ENCODE measurements at regions of chr9 and their contacts with region 1.

Region 1: DNA sequence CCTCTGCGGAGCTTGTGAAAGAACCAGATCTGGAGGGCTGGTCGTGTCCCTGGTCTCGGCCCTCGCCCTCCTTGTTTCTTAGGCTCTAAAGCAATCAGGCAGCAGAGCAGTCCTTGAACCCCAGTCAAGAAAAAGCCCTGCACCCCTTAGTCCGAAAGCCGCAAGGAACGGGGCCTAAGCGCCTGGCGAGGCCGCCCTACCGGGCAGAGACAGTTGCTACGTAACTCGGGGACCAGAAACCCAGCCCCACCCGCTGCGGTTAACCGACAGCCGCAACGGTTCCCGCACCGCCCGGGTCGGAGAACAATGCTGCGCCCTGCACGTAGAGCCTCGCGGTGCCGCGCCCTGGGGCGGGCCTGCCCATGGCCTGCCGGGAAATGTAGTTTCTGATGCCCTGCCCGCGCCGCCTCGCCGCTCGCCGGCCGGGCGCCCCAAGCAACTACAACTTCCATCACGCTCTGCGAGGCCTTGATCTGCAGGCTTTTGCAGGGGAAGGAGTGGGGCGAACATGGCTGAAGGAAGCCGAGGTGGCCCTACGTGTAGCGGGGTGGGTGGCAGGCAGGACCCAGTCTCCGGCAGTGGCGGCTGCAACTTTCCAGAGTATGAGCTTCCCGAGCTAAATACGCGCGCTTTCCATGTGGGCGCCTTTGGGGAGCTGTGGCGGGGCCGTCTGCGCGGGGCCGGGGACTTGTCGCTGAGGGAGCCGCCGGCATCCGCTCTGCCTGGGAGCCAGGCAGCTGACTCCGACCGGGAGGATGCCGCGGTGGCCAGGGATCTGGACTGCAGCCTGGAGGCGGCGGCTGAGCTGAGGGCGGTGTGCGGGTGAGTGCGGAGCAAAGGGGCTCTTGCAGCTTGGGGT is at the start of gene SNAPC3:
- DNase-seq: peak; percentile 95
- ATAC-seq: peak; percentile 98
- H3K4me3 ChIP-seq: peak within 1 kb of the TSS; percentile 73 to 95 (median 87)
- H3K4me3 Mint-ChIP-seq: peak within 1 kb of the TSS; percentile 93
- H3K27ac ChIP-seq: peak within 1 kb of the TSS; percentile 68 to 74
- H3K27ac Mint-ChIP-seq: peak within 1 kb of the TSS; percentile 84
- H3K4me1 ChIP-seq: peaks cover 32 to 34% of the 10 kb centered on the region in 2 donors
- H3K4me1 Mint-ChIP-seq: peaks cover 39% of the 10 kb centered on the region
- H3K27me3 ChIP-seq: no peaks in the 10 kb centered on the region
- H3K27me3 Mint-ChIP-seq: no peaks in the 10 kb centered on the region
- CTCF ChIP-seq: no peak
- total RNA-seq, gene SNAPC3: 48.3 and 52.1 TPM in 2 replicates

Region 2: DNA sequence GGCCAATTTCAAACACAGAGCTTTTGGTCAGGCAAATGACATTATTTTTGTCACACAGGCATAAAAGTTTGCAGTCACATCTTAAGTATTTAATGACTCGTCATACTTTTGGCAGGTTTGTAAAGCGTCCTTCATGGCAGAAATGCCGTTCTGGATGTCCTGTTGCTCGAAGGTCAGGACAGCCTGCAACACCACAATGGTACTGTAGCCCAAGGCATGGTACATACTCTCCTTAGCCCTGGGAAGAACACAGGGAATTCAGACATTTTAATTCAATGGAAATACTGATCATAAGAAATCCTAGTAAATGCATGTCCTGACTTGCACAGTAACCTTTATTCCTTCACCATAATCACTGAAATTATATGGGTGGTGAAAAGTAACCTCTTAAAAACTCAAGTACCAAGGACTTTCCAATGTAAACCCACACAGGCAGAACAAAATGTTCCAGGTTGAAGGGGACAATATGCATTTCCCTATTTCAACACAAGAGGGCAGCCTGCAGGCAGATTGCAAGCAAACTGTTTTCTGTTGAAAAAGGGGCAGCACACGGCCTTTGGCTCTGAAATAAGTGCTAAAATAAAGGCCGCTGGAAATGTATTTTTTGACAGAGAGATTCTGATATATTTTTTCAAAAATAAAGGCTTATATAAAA is 211.3 kb before region 1 on chr9:
- CTCF ChIA-PET with region 1: interaction called, 3 read pairs
- POLR2A ChIA-PET with region 1: no interaction called
- intact Hi-C with region 1: loop called (anchors 1 kb)
- DNase-seq: peak; percentile 69
- ATAC-seq: peak; percentile 54
- H3K4me3 ChIP-seq: no peak overlapping the region
- H3K4me3 Mint-ChIP-seq: no peak overlapping the region
- H3K27ac ChIP-seq: no peak overlapping the region
- H3K27ac Mint-ChIP-seq: no peak overlapping the region
- H3K4me1 ChIP-seq: no peaks in the 10 kb centered on the region
- H3K4me1 Mint-ChIP-seq: no peaks in the 10 kb centered on the region
- H3K27me3 ChIP-seq: no peaks in the 10 kb centered on the region
- H3K27me3 Mint-ChIP-seq: no peaks in the 10 kb centered on the region
- CTCF ChIP-seq: peak; percentile 96

Region 3: DNA sequence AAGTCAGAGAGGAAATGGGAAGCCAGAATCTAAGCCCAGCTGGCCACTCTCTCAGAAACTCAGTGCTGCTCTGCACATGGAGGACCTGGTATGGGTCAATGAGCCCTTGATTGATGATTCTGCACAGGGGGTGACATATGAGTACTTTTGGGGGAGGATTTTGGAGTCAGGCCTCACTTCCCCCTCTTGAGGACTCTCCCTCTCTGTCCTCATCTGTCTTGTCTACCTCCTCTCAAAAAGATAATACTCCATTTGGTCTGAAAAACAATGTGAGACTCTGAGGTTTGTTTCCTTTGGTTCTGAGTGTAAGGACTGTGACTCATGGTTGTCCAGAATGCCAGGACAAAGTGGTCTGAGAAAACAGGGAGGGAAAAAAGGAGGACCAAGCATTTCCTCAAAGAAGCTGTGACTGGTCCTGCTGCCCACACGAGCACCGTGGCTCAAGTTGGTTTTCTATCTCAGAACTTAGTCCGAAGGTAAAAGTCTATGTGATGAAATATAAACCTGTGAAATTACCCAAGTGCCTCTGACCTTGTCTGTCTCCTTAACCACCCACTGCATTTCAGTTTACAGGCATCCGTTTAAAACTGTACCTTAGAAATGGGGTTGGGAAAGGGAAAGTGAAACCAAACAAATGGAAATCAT is 126.7 kb before region 1 on chr9:
- CTCF ChIA-PET with region 1: no interaction called
- POLR2A ChIA-PET with region 1: no interaction called
- intact Hi-C with region 1: loop called (anchors 2 kb)
- DNase-seq: peak; percentile 47
- ATAC-seq: peak; percentile 53
- H3K4me3 ChIP-seq: peak overlapping the region; percentile 18 to 67 (median 53)
- H3K4me3 Mint-ChIP-seq: peak overlapping the region; percentile 84
- H3K27ac ChIP-seq: peak overlapping the region; percentile 59 to 86
- H3K27ac Mint-ChIP-seq: peak overlapping the region; percentile 89
- H3K4me1 ChIP-seq: peaks cover 55 to 56% of the 10 kb centered on the region in 2 donors
- H3K4me1 Mint-ChIP-seq: peaks cover 55% of the 10 kb centered on the region
- H3K27me3 ChIP-seq: no peaks in the 10 kb centered on the region
- H3K27me3 Mint-ChIP-seq: no peaks in the 10 kb centered on the region
- CTCF ChIP-seq: no peak

Region 4: GRCh38 chr9:15469406-15469805 is 46.8 kb after region 1 on chr9:
- CTCF ChIA-PET with region 1: no interaction called
- POLR2A ChIA-PET with region 1: no interaction called
- intact Hi-C with region 1: loop called (anchors 5 kb)
- DNase-seq: no peak
- ATAC-seq: no peak
- H3K4me3 ChIP-seq: no peak overlapping the region
- H3K4me3 Mint-ChIP-seq: no peak overlapping the region
- H3K27ac ChIP-seq: no peak overlapping the region
- H3K27ac Mint-ChIP-seq: no peak overlapping the region
- H3K4me1 ChIP-seq: no peaks in the 10 kb centered on the region
- H3K4me1 Mint-ChIP-seq: no peaks in the 10 kb centered on the region
- H3K27me3 ChIP-seq: no peaks in the 10 kb centered on the region
- H3K27me3 Mint-ChIP-seq: no peaks in the 10 kb centered on the region
- CTCF ChIP-seq: no peak

Region 5: GRCh38 chr9:15510789-15511575 is 88.4 kb after region 1 on chr9 and contains the start of gene PSIP1:
- CTCF ChIA-PET with region 1: no interaction called
- POLR2A ChIA-PET with region 1: interaction called, 5 read pairs
- intact Hi-C with region 1: loop called (anchors 1 kb)
- DNase-seq: peak; percentile 95
- ATAC-seq: peak; percentile 79
- H3K4me3 ChIP-seq: peak within 1 kb of the TSS; percentile 60 to 96 (median 94)
- H3K4me3 Mint-ChIP-seq: peak within 1 kb of the TSS; percentile 95
- H3K27ac ChIP-seq: peak within 1 kb of the TSS; percentile 97 to 98
- H3K27ac Mint-ChIP-seq: peak within 1 kb of the TSS; percentile 100
- H3K4me1 ChIP-seq: peaks cover 30 to 40% of the 10 kb centered on the region in 2 donors
- H3K4me1 Mint-ChIP-seq: peaks cover 58% of the 10 kb centered on the region
- H3K27me3 ChIP-seq: no peaks in the 10 kb centered on the region
- H3K27me3 Mint-ChIP-seq: no peaks in the 10 kb centered on the region
- CTCF ChIP-seq: no peak
- total RNA-seq, gene PSIP1: 124 and 134 TPM in 2 replicates

Region 6: GRCh38 chr9:15552636-15553527 is 130.3 kb after region 1 on chr9 and contains the start of gene CCDC171:
- CTCF ChIA-PET with region 1: no interaction called
- POLR2A ChIA-PET with region 1: interaction called, 3 read pairs
- intact Hi-C with region 1: loop called (anchors 1 kb)
- DNase-seq: peak; percentile 91
- ATAC-seq: peak; percentile 81
- H3K4me3 ChIP-seq: peak within 1 kb of the TSS; percentile 75 to 96 (median 83)
- H3K4me3 Mint-ChIP-seq: peak within 1 kb of the TSS; percentile 98
- H3K27ac ChIP-seq: peak within 1 kb of the TSS; percentile 40 to 52
- H3K27ac Mint-ChIP-seq: peak within 1 kb of the TSS; percentile 90
- H3K4me1 ChIP-seq: peaks cover 13 to 18% of the 10 kb centered on the region in 2 donors
- H3K4me1 Mint-ChIP-seq: peaks cover 17% of the 10 kb centered on the region
- H3K27me3 ChIP-seq: peaks cover 0 to 3% (median 0%) of the 10 kb centered on the region in 4 experiments
- H3K27me3 Mint-ChIP-seq: no peaks in the 10 kb centered on the region
- CTCF ChIP-seq: peak; percentile 8
- total RNA-seq, gene CCDC171: 5.1 and 6.3 TPM in 2 replicates